ENCODE measurements at regions of chr13 and their contacts with region 1.

Region 1: DNA sequence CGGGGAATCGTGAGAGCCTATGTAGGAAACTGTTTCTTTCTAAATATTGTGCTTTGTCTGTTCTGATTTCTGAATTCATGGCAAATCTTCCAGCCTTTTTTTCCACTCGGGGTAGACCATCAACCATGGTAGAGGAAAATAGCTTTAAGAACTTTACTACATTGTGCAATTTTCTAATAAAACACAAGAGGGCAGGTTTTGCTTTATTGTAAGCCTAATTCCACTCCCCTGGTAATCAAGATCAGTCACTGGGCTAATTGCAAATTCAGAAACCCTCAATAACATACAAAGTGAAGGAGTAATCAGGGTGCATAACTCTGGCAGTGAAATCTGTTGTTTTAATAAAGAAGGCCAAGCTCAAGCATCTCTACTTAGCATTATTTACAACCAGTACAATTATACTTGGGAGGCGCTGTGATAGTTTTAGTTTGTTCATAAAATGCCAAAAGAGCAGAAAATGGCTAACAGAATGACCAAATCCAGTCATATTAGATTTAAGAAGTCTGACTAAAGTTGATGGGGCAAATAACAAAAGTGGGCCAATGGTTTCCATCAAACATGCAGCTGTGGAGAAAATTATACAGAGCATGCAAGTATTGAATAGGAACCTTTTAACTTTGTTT is 43.8 kb downstream of the DCT start:
- DNase-seq: peak; percentile 2
- H3K4me3 ChIP-seq: no peak overlapping the region
- H3K27me3 ChIP-seq: no peaks in the 10 kb centered on the region
- CTCF ChIP-seq: peak; percentile 62

Region 2: DNA sequence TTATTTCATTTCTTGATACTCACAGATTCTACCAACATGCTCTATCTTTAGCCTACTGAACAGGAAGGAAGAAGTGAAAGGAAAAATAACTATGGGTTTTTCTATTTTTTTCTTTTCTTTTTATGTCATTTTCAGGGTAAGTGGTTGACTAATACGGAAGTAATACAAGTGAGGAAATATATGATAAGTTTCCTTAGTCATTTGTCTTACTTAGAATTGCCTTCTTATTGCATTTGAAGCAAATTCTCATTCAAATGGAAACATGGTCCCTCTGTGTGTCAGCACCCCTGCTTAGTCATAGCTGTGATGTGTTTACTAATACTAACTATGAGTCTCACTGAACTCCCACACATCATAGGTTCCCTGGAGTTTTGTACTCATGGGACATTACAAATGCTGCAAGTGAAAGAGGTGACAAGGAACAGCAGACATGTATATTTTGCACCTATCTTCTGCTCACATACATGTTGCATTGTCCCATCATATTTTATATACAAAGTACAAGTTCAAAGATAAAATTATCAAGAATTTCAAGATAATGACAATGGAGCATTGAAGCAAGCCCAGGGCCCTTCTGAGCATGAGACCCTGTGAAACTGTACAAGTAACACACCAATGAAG is 16.3 kb before region 1 on chr13:
- CTCF ChIA-PET with region 1: interaction called, 12 read pairs
- POLR2A ChIA-PET with region 1: no interaction called
- DNase-seq: no peak
- H3K4me3 ChIP-seq: no peak overlapping the region
- H3K27me3 ChIP-seq: no peaks in the 10 kb centered on the region; the same call in 1 of the 2 replicates
- CTCF ChIP-seq: no peak

Region 3: DNA sequence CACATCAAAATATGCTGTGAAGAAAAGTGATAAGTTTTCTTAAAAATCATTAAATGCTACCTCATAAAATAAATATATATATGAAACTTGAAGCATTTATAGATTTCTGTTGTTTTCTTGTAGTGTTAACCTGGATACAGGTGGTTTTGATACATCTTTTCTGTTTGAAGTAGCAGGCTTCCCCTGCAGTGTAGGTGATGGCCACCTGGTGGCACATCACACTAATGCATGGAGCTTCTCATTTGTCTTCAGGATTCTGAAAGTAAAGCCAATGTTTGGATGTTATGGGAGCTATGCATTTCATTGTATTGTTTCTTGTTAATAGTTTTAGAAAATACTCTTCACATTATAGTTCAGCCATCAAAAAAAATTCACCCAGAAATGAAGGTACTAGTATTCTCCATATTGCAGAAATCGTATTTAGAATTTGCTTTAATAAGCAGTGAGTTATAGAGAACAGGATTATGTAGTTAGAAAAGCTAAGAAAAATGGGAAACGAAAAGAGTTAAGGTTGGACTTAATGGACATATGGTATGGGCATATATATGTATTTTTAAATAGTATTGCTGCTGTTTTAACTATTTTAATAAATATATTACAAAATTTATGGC is 184.7 kb after region 1 on chr13:
- CTCF ChIA-PET with region 1: interaction called, 67 read pairs
- POLR2A ChIA-PET with region 1: no interaction called
- DNase-seq: no peak
- H3K4me3 ChIP-seq: no peak overlapping the region
- H3K27me3 ChIP-seq: no peaks in the 10 kb centered on the region
- CTCF ChIP-seq: peak; percentile 69

Region 4: GRCh38 chr13:95494082-95494681 is 1058.5 kb after region 1 on chr13:
- CTCF ChIA-PET with region 1: no interaction called
- POLR2A ChIA-PET with region 1: no interaction called
- DNase-seq: peak; percentile 9
- H3K4me3 ChIP-seq: no peak overlapping the region
- H3K27me3 ChIP-seq: no peaks in the 10 kb centered on the region
- CTCF ChIP-seq: peak; percentile 69

Measured in BJ (cell line).